Activated B cell treated with CpG ODN at 0.5 μM for 24 hours (primary cell): ENCODE measurements at regions of chr1 and their contacts with region 1.

Region 1: GRCh38 chr1:115924770-115925169 is 51.5 kb upstream of the SLC22A15 start:
- DNase-seq: no peak
- ATAC-seq: no peak
- H3K4me3 Mint-ChIP-seq: no peak overlapping the region
- H3K27ac Mint-ChIP-seq: no peak overlapping the region
- H3K4me1 Mint-ChIP-seq: peaks cover 21% of the 10 kb centered on the region
- H3K27me3 Mint-ChIP-seq: peaks cover 2% of the 10 kb centered on the region
- CTCF ChIP-seq: no peak

Region 2: GRCh38 chr1:115952645-115953044 is 27.9 kb after region 1 on chr1:
- CTCF ChIA-PET with region 1: no interaction called
- POLR2A ChIA-PET with region 1: no interaction called
- intact Hi-C with region 1: loop called (anchors 2 kb)
- DNase-seq: no peak
- ATAC-seq: no peak
- H3K4me3 Mint-ChIP-seq: no peak overlapping the region
- H3K27ac Mint-ChIP-seq: no peak overlapping the region
- H3K4me1 Mint-ChIP-seq: peaks cover 5% of the 10 kb centered on the region
- H3K27me3 Mint-ChIP-seq: peaks cover 15% of the 10 kb centered on the region
- CTCF ChIP-seq: no peak

Region 3: GRCh38 chr1:116006486-116006964 is 81.8 kb after region 1 on chr1:
- CTCF ChIA-PET with region 1: no interaction called
- POLR2A ChIA-PET with region 1: no interaction called
- intact Hi-C with region 1: no loop called
- DNase-seq: no peak
- ATAC-seq: no peak
- H3K4me3 Mint-ChIP-seq: peak overlapping the region; percentile 61
- H3K27ac Mint-ChIP-seq: peak overlapping the region; percentile 42
- H3K4me1 Mint-ChIP-seq: peaks cover 21% of the 10 kb centered on the region
- H3K27me3 Mint-ChIP-seq: no peaks in the 10 kb centered on the region
- CTCF ChIP-seq: no peak

Region 4: DNA sequence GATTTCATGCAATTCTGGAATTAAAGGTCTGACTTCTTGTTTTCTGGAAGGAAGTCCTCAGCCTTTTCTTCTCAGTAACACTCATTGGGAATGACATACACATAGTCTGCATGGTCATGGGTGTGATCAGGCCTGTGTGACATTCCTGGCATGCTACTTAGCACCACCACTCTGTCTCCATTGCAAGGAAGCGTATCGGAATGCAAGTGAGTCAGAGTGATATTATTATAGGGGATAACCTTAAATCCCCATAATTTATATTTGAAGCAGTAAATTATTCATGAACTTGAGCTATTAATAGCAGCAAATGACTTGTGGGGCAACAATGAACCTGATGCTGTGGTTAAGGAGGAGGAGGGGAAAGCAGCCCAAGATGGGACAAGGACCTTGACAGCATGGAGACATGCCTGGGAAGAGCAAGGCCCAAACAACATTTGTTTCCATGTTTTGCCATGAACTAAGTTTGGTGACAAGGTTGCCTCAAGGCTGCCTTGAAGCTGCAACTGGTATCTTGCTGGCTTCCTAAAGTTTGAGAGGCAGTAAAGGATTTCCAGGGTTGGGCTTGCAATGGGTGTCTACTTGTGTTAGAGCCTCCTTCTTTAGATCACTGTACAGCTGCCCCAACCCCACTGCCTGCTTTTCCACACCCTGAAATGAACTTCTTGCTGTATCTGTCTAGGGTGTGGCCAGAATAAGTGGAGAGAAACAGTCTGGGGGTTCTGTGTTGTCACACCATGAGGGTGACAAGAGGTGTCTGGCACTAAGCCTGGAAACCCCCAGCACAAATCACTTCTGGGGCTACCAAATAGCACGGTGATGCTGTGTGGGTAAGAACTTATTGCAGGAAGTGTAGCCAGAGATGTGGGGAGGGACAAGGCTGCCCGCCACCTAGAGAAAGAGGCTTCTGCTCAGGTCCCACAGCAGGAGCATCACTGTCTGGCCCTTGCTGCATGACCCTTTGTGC is 191.0 kb after region 1 on chr1:
- CTCF ChIA-PET with region 1: no interaction called
- POLR2A ChIA-PET with region 1: no interaction called
- intact Hi-C with region 1: no loop called
- DNase-seq: no peak
- ATAC-seq: no peak
- H3K4me3 Mint-ChIP-seq: no peak overlapping the region
- H3K27ac Mint-ChIP-seq: no peak overlapping the region
- H3K4me1 Mint-ChIP-seq: peaks cover 4% of the 10 kb centered on the region
- H3K27me3 Mint-ChIP-seq: peaks cover 10% of the 10 kb centered on the region
- CTCF ChIP-seq: no peak